Motor neuron (in vitro differentiated cells): ENCODE measurements at regions of chr18 and their contacts with region 1.

Region 1: DNA sequence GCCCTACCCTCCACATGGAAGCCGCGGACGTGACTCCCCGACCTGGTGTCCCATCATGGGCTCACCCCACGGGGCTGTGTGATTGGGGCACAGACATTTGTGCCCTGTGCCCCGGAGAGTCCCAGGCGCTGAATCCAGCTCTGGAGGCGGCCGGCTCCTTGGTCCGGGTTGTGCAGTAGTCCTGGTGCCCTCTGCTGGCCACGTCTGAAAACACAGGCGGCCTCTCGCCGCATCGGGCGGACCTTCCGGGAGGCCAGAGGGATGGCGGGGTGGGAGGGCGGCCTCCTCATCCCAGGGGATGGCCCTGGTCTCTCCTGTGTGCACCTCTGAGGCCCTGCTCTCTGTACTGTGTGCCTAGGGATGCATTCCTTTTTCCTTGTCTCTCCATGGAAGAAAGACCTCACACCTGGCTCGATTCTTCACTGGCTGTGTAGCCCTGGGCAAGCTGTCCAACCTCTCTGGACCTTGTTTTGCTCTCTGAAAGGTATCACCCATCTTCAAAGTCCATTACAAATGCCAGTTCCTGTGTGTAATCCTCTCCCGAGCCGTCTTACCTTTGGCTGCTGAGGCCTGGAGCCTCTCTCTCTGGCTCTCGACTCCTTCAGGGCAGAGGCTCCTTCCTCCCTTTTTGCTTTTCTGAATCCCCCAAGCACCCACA is 27.6 kb downstream of the CELF4 start:
- ATAC-seq: peak; percentile 43 to 92 (median 64)
- H3K4me3 ChIP-seq: no peak overlapping the region
- H3K27ac ChIP-seq: no peak overlapping the region
- H3K4me1 ChIP-seq: peaks cover 76 to 77% of the 10 kb centered on the region in 2 donors

Region 2: DNA sequence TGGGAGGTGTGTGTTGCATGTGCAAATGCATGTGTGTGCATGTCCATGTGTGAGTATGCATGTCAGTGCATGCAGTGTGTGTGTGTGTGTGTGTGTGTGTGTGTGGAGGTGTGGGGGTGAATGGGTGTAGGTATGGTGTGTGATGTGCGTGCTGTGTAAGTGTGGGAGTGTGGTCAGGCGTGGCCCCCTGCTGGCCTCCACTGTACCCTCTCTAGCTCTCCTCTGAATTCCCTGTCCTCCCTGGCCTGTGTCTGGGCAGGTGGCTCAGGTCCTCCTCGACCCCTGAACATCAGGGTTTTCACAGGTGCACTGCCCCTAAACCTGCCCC is 202.6 kb before region 1 on chr18:
- in situ Hi-C with region 1: loop called in 1 of 9 experiments (anchors 25 kb)
- ATAC-seq: peak; percentile 56 to 93 (median 72)
- H3K4me3 ChIP-seq: no peak overlapping the region
- H3K27ac ChIP-seq: peak overlapping the region; percentile 62 to 87
- H3K4me1 ChIP-seq: peaks cover 39 to 50% of the 10 kb centered on the region in 2 donors

Region 3: GRCh38 chr18:37364237-37364636 is 173.8 kb before region 1 on chr18:
- in situ Hi-C with region 1: loop called in 1 of 9 experiments (anchors 25 kb)
- ATAC-seq: peak in 1 of 8 experiments; percentile 14
- H3K4me3 ChIP-seq: no peak overlapping the region
- H3K27ac ChIP-seq: no peak overlapping the region
- H3K4me1 ChIP-seq: peaks cover 35 to 44% of the 10 kb centered on the region in 2 donors

Region 4: DNA sequence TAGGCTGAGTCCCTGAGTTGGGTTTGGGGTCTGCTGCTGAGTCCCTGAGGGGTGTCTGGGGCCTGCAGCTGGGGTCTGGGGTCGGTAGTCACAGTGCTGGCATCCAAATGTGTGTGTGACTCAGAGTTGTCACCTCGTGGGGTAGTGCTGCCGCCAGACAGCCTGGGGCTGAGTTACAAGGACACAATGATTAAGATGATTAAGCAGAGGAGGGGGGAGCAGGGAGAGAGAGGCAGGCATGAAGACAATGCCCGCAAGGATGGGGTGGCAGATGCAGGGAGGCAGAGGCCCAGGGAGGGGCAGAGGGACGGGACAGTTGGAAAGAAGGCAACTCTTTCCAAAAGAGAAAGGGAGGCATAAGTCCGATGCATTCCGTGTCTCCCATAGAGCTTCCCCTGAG is 92.6 kb before region 1 on chr18:
- in situ Hi-C with region 1: loop called in 1 of 9 experiments (anchors 10 kb)
- ATAC-seq: peak in 5 of 8 experiments; percentile 28 to 48 (median 43)
- H3K4me3 ChIP-seq: no peak overlapping the region
- H3K27ac ChIP-seq: peak overlapping the region; percentile 42 to 53
- H3K4me1 ChIP-seq: peaks cover 78 to 80% of the 10 kb centered on the region in 2 donors